ENCODE measurements at regions of chr3 and their contacts with region 1.

Region 1: DNA sequence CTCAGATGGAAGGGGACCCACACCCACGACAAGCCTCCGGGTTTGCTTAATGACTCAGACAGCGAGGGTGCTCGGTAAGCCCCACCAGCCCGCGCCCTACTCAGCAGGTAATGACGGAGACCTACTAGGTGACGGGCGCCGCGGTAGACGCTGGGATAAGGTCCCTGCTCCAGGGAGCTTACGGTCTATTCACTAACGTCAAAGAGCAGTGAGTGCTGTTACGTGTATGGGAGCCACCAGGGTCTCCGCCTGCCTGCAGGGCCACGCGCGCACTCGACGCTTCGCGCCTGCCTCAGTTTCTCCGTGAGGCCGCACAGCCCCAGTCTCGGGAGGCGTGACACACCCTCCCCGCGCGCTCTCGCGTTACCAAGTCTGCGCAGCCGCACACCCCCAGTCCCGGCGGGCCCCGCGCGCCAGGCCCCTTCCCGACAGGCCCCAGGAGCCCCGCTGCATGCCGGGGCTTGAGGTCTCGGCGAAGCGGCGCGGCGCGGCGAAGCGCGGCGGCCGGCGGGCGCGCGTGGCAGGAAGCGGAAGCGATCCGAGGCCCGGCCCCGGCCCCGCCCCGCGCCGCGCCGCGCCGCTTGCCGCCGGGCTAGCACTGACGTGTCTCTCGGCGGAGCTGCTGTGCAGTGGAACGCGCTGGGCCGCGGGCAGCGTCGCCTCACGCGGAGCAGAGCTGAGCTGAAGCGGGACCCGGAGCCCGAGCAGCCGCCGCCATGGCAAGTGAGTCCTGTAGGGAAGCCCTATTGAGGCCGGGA is at the start of gene SEC61A1:
- DNase-seq: peak; percentile 98
- ATAC-seq: peak; percentile 96
- H3K4me3 Mint-ChIP-seq: peak within 1 kb of the TSS; percentile 90
- H3K27ac Mint-ChIP-seq: peak within 1 kb of the TSS; percentile 98
- H3K4me1 Mint-ChIP-seq: peaks cover 34% of the 10 kb centered on the region
- H3K27me3 Mint-ChIP-seq: no peaks in the 10 kb centered on the region
- total RNA-seq, gene SEC61A1: 113 to 123 TPM

Region 2: DNA sequence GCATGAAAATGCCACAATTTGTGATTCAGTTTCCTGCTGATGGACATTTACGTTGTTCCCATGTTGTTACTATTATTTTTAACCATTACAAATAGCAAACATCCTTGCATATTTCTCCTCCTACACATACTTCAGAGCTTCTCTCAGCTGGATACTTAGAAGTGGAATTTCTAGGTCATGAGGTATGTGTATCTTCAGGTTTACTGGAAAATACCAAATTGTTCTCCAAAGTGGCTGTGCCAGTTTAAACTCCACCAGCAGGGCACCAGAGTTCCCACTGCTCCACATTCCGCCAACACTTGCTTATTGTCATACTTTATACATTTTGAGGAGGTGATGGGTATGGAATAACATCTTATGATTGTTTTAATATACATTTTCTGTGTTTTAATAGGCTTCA is 813.4 kb before region 1 on chr3:
- CTCF ChIA-PET with region 1: no interaction called
- POLR2A ChIA-PET with region 1: no interaction called
- intact Hi-C with region 1: no loop called
- DNase-seq: no peak
- ATAC-seq: no peak
- H3K4me3 Mint-ChIP-seq: no peak overlapping the region
- H3K27ac Mint-ChIP-seq: no peak overlapping the region
- H3K4me1 Mint-ChIP-seq: no peaks in the 10 kb centered on the region
- H3K27me3 Mint-ChIP-seq: peaks cover 9% of the 10 kb centered on the region

Region 3: DNA sequence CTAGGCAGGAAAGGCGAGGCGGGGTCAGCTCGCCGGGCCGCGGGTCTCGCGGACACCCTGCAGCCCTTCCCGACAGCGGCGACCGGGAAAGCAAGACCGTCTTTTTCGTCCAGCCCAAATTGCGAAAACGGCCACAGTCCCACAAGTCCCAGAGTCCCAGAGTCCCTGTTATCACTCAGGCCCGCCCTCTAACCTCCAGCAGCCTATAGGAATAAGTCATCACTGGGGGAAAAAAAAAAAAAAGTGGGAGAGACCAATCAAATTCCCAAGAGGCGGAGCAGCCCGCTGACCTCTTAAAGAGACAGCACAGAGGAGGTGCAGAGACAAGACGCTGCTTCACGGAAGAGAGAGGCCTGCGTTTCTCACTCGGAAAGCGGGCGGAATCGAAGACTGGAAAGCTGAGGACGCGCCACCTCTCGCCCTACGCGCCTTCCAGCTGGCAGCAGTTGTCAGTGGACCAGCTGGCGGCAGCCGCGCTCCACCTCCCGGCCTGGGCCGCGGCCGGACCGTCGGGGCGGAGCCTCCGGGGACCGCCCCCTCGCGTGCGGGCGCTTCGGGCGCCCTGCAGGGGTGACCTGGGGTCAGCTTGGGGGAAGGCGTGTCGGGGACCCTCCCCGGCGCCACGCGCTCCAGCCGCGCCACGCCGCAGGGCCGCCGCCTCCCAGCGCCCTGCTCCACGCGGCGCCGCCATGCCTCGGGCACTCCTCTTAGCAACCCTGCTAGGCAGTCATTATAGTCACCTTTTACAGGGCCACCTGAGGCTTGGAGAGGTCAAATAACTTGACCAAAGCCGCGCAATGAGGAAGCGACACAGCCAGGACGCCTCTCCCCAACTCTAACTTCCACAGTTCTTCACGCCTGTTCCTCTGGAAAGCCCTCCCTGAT is 461.2 kb before region 1 on chr3 and contains the start of gene TPRA1:
- CTCF ChIA-PET with region 1: interaction called, 3 read pairs
- POLR2A ChIA-PET with region 1: no interaction called
- intact Hi-C with region 1: loop called (anchors 1 to 10 kb)
- DNase-seq: peak; percentile 88
- ATAC-seq: peak; percentile 86
- H3K4me3 Mint-ChIP-seq: peak within 1 kb of the TSS; percentile 84
- H3K27ac Mint-ChIP-seq: peak within 1 kb of the TSS; percentile 96
- H3K4me1 Mint-ChIP-seq: peaks cover 25% of the 10 kb centered on the region
- H3K27me3 Mint-ChIP-seq: no peaks in the 10 kb centered on the region
- total RNA-seq, gene TPRA1: 22.5 to 24.8 TPM

Region 4: DNA sequence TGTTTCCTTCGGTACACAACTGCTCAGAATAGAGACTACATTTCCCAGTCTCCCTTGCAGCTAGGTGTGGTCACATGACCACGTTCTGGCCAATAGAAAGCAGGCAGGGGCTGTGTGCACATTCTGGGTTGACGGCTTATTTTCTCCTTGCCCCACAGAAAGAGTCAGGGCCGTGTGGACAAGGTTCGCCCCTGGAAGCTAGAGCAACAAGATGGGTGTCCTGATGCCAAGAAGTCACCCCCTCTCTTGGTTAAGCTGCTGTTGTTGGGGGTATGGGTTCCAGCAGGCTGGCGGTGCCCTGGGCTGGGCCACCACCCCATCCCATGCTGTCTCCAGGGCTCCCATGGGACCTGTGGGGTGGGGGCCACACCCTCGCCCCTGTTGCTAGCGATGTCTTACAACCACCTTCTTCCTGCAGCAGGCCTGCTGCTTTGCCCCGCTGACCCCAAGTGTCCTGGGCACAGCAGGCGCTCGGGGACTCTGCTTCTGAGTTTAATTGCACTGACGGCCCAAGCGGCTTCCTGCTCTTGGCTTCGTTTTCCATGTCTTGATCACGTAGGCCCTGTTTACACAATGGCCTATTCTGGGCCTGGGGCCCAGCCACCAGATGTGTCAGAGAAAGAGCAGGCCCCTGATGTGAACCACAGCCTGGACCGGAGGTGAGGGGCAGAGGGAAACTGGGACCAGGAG is 354.3 kb before region 1 on chr3:
- CTCF ChIA-PET with region 1: no interaction called
- POLR2A ChIA-PET with region 1: no interaction called
- intact Hi-C with region 1: no loop called
- DNase-seq: peak; percentile 75
- ATAC-seq: peak; percentile 92
- H3K4me3 Mint-ChIP-seq: no peak overlapping the region
- H3K27ac Mint-ChIP-seq: no peak overlapping the region
- H3K4me1 Mint-ChIP-seq: peaks cover 3% of the 10 kb centered on the region
- H3K27me3 Mint-ChIP-seq: no peaks in the 10 kb centered on the region

Region 5: DNA sequence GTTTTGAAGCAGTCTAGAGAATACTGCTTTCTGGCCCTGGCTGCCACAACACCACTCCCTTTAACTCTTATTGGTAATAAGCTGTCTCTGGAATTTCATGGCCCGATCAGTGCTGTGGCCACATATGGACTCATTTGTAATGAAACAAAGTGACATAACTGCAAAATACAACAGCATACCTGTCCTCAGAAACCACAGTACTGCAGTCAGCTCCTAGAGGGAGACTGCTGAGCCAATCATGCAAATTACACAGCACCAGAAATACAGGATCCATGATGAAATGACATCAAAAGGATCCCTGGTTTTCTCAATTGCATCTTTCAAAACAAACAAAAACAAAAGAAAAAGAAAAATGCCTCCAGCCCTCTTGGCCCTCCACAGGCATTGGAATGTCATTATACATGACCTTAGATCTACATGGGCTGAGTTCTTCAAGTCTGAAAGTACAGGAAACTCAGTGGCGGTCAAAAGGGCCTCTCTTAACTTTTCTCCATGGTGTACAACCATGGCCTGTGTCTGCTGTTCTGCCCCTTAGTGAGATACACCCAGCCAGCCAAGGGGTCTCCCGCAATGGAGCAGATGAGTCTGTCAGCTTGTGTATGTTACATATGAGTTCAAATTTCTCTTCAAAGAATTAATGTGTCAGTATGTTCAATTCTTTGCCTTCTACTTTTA is 161.9 kb before region 1 on chr3:
- CTCF ChIA-PET with region 1: no interaction called
- POLR2A ChIA-PET with region 1: no interaction called
- intact Hi-C with region 1: loop called in 1 of 2 experiments (anchors 1 kb)
- DNase-seq: no peak
- ATAC-seq: peak; percentile 53
- H3K4me3 Mint-ChIP-seq: no peak overlapping the region
- H3K27ac Mint-ChIP-seq: peak overlapping the region; percentile 73
- H3K4me1 Mint-ChIP-seq: peaks cover 8% of the 10 kb centered on the region
- H3K27me3 Mint-ChIP-seq: peaks cover 7% of the 10 kb centered on the region

Region 6: GRCh38 chr3:128112357-128112968 is 60.4 kb after region 1 on chr3:
- CTCF ChIA-PET with region 1: no interaction called
- POLR2A ChIA-PET with region 1: no interaction called
- intact Hi-C with region 1: loop called in 1 of 2 experiments (anchors 2 kb)
- DNase-seq: peak; percentile 65
- ATAC-seq: peak; percentile 95
- H3K4me3 Mint-ChIP-seq: peak overlapping the region; percentile 15
- H3K27ac Mint-ChIP-seq: peak overlapping the region; percentile 93
- H3K4me1 Mint-ChIP-seq: peaks cover 47% of the 10 kb centered on the region
- H3K27me3 Mint-ChIP-seq: no peaks in the 10 kb centered on the region

Region 7: GRCh38 chr3:128617557-128618397 is 565.8 kb after region 1 on chr3:
- CTCF ChIA-PET with region 1: no interaction called
- POLR2A ChIA-PET with region 1: no interaction called
- intact Hi-C with region 1: loop called in 1 of 2 experiments (anchors 1 kb)
- DNase-seq: peak; percentile 100
- ATAC-seq: peak; percentile 86
- H3K4me3 Mint-ChIP-seq: peak overlapping the region; percentile 92
- H3K27ac Mint-ChIP-seq: peak overlapping the region; percentile 97
- H3K4me1 Mint-ChIP-seq: peaks cover 33% of the 10 kb centered on the region
- H3K27me3 Mint-ChIP-seq: no peaks in the 10 kb centered on the region

Region 8: GRCh38 chr3:128804017-128804810 is 752.2 kb after region 1 on chr3:
- CTCF ChIA-PET with region 1: no interaction called
- POLR2A ChIA-PET with region 1: no interaction called
- intact Hi-C with region 1: loop called in 1 of 2 experiments (anchors 10 kb)
- DNase-seq: peak; percentile 78
- ATAC-seq: peak; percentile 76
- H3K4me3 Mint-ChIP-seq: peak overlapping the region; percentile 69
- H3K27ac Mint-ChIP-seq: peak overlapping the region; percentile 97
- H3K4me1 Mint-ChIP-seq: peaks cover 86% of the 10 kb centered on the region
- H3K27me3 Mint-ChIP-seq: no peaks in the 10 kb centered on the region

Region 9: GRCh38 chr3:129439817-129440617 is 1388.0 kb after region 1 on chr3 and contains the starts of genes IFT122 and MBD4:
- CTCF ChIA-PET with region 1: no interaction called
- POLR2A ChIA-PET with region 1: no interaction called
- intact Hi-C with region 1: loop called in 1 of 2 experiments (anchors 5 kb)
- DNase-seq: peak; percentile 99
- ATAC-seq: peak; percentile 90
- H3K4me3 Mint-ChIP-seq: peak within 1 kb of the TSS; percentile 100
- H3K27ac Mint-ChIP-seq: peak within 1 kb of the TSS; percentile 91
- H3K4me1 Mint-ChIP-seq: peaks cover 63% of the 10 kb centered on the region
- H3K27me3 Mint-ChIP-seq: no peaks in the 10 kb centered on the region
- total RNA-seq, gene IFT122: 18.4 to 22.6 TPM
- total RNA-seq, gene MBD4: 51.3 to 52.4 TPM